ENCODE measurements at regions of chr12 and their contacts with region 1.

Region 1: GRCh38 chr12:121888478-121889266 is at the start of gene PSMD9:
- DNase-seq: peak; percentile 99
- H3K4me3 Mint-ChIP-seq: peak within 1 kb of the TSS; percentile 100
- H3K27ac Mint-ChIP-seq: peak within 1 kb of the TSS; percentile 94
- H3K4me1 Mint-ChIP-seq: peaks cover 39% of the 10 kb centered on the region
- H3K27me3 Mint-ChIP-seq: no peaks in the 10 kb centered on the region
- total RNA-seq, gene PSMD9: 60.7 to 64.1 TPM

Region 2: DNA sequence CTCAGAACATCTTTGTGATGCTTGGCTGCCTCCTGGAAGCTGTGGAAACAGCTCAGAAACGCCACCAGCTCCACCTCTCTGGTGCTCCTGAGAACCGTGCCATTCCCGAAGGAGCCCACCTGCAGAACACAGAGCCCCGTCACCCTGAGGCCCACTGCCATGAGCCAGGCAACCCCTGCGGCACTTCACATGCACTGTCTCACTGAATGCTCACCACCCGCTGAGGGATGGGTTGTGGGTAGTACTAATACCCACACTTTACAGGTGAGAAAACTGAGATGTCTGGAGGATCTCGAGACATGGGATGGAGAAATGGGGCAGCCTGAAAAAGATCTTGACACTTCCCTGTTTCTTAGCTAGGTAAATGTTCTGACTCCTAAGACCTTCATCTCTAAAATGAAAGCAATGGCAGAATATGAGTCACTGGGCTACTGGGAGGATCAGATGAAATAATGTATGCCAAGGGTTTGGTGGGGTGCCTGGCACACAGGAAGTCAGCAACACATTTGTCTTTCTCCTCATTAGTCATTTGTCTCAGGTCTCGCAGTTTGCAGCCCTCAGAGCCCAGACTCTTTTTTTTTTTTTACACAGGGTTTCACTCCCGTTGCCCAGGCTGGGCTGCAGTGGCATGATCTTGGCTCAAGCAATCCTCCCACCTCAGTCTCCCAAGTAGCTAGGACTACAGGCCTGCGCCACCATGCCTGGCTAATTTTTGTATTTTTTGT is 854.9 kb before region 1 on chr12:
- CTCF ChIA-PET with region 1: no interaction called
- POLR2A ChIA-PET with region 1: no interaction called
- intact Hi-C with region 1: loop called (anchors 5 kb)
- DNase-seq: peak; percentile 80
- H3K4me3 Mint-ChIP-seq: peak overlapping the region; percentile 10
- H3K27ac Mint-ChIP-seq: peak overlapping the region; percentile 72
- H3K4me1 Mint-ChIP-seq: peaks cover 58% of the 10 kb centered on the region
- H3K27me3 Mint-ChIP-seq: no peaks in the 10 kb centered on the region

Region 3: DNA sequence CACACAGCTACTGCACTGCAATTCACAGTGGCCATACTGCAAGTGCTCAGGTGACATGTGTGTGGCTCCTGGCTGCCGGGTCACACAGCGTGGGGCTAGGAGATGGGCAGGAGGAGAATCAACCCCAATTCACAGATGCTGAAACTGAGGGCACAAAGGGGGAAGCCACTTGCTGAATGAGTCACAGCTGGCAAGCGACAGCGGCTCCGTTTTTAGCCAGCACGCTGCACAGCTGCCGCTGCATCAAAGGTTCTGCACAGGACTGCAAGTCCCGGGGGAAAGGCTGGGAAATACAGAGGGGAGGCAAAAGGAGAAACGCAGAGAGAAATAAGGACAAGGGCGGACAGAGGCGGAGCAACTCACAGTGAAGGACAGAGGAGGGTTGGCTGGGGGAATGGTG is 365.7 kb before region 1 on chr12:
- CTCF ChIA-PET with region 1: no interaction called
- POLR2A ChIA-PET with region 1: no interaction called
- intact Hi-C with region 1: no loop called
- DNase-seq: no peak
- H3K4me3 Mint-ChIP-seq: no peak overlapping the region
- H3K27ac Mint-ChIP-seq: no peak overlapping the region
- H3K4me1 Mint-ChIP-seq: peaks cover 9% of the 10 kb centered on the region
- H3K27me3 Mint-ChIP-seq: no peaks in the 10 kb centered on the region

Region 4: DNA sequence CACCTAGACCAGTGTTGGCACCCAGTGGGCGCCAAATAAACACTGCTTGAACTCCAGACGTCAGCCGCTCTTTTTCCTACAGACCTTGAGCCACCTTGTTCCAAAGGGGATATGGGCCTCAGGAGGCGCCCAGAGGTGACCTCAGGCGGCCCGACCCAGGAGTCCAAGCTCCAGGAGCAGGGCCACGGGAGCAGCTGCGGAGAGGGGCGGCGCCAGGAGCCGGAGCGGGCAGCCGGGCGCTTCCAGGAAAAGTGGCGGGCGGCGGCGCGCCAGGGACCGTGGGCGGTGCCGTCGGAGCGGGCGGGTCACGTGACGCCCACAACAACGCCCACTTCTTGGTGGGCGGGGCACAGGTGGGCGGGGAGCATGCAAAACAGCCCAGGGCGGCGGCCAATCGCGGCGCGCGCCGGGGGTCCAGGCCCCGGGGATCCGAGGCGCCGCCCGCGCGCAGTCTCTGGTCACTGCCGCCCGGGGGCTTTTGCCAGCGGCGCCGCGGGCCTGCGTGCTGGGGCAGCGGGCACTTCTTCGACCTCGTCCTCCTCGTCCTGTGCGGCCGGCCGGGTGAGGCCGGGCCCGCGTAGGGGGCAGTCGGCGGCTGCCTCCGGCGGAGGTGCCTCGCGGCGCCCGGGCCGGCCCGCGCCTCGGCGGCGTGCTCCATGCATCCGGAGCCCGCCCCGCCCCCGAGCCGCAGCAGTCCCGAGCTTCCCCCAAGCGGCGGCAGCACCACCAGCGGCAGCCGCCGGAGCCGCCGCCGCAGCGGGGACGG is 262.4 kb before region 1 on chr12 and contains the start of gene ORAI1:
- CTCF ChIA-PET with region 1: no interaction called
- POLR2A ChIA-PET with region 1: interaction called, 3 read pairs
- intact Hi-C with region 1: loop called (anchors 2 kb)
- DNase-seq: peak; percentile 96
- H3K4me3 Mint-ChIP-seq: peak within 1 kb of the TSS; percentile 92
- H3K27ac Mint-ChIP-seq: peak within 1 kb of the TSS; percentile 99
- H3K4me1 Mint-ChIP-seq: peaks cover 37% of the 10 kb centered on the region
- H3K27me3 Mint-ChIP-seq: no peaks in the 10 kb centered on the region
- total RNA-seq, gene ORAI1: 41.6 to 43.2 TPM

Region 5: GRCh38 chr12:121697098-121697698 is 191.5 kb before region 1 on chr12:
- CTCF ChIA-PET with region 1: interaction called, 4 read pairs
- POLR2A ChIA-PET with region 1: no interaction called
- intact Hi-C with region 1: loop called (anchors 1 kb)
- DNase-seq: no peak
- H3K4me3 Mint-ChIP-seq: no peak overlapping the region
- H3K27ac Mint-ChIP-seq: no peak overlapping the region
- H3K4me1 Mint-ChIP-seq: no peaks in the 10 kb centered on the region
- H3K27me3 Mint-ChIP-seq: no peaks in the 10 kb centered on the region

Region 6: GRCh38 chr12:121781998-121782979 is 106.4 kb before region 1 on chr12:
- CTCF ChIA-PET with region 1: interaction called, 6 read pairs
- POLR2A ChIA-PET with region 1: interaction called, 9 read pairs
- intact Hi-C with region 1: loop called (anchors 2 kb)
- DNase-seq: peak; percentile 88
- H3K4me3 Mint-ChIP-seq: peak overlapping the region; percentile 68
- H3K27ac Mint-ChIP-seq: peak overlapping the region; percentile 96
- H3K4me1 Mint-ChIP-seq: peaks cover 70% of the 10 kb centered on the region
- H3K27me3 Mint-ChIP-seq: no peaks in the 10 kb centered on the region

Region 7: GRCh38 chr12:121811434-121812319 is 77.0 kb before region 1 on chr12:
- CTCF ChIA-PET with region 1: interaction called, 46 read pairs
- POLR2A ChIA-PET with region 1: interaction called, 7 read pairs
- intact Hi-C with region 1: loop called (anchors 2 kb)
- DNase-seq: peak; percentile 77
- H3K4me3 Mint-ChIP-seq: peak overlapping the region; percentile 79
- H3K27ac Mint-ChIP-seq: peak overlapping the region; percentile 78
- H3K4me1 Mint-ChIP-seq: peaks cover 44% of the 10 kb centered on the region
- H3K27me3 Mint-ChIP-seq: no peaks in the 10 kb centered on the region

Region 8: GRCh38 chr12:121917979-121918678 is 29.5 kb after region 1 on chr12 and contains the start of gene CFAP251:
- CTCF ChIA-PET with region 1: interaction called, 10 read pairs
- POLR2A ChIA-PET with region 1: interaction called, 3 read pairs
- intact Hi-C with region 1: loop called (anchors 2 kb)
- DNase-seq: peak; percentile 98
- H3K4me3 Mint-ChIP-seq: peak within 1 kb of the TSS; percentile 77
- H3K27ac Mint-ChIP-seq: peak within 1 kb of the TSS; percentile 84
- H3K4me1 Mint-ChIP-seq: peaks cover 14% of the 10 kb centered on the region
- H3K27me3 Mint-ChIP-seq: no peaks in the 10 kb centered on the region
- total RNA-seq, gene CFAP251: 1.3 to 1.6 TPM

Measured in activated CD4-positive, alpha-beta memory T cell treated with anti-CD3 and anti-CD28 coated beads for 36 hours (primary cell).